CD14-positive monocyte (primary cell): ENCODE measurements at regions of chr16 and their contacts with region 1.

Region 1: GRCh38 chr16:4802659-4803287 is 340 bp upstream of the ROGDI start:
- DNase-seq: peak; percentile 83 to 91 (median 86)
- H3K4me3 ChIP-seq: peak overlapping the region; percentile 72 to 92 (median 75)
- H3K4me3 Mint-ChIP-seq: peak overlapping the region; percentile 87 to 89
- H3K27ac ChIP-seq: peak overlapping the region; percentile 77 to 86
- H3K27ac Mint-ChIP-seq: peak overlapping the region; percentile 86 to 97 (median 96)
- H3K4me1 ChIP-seq: peaks cover 40 to 48% of the 10 kb centered on the region in 2 donors
- H3K4me1 Mint-ChIP-seq: peaks cover 42% of the 10 kb centered on the region
- H3K27me3 ChIP-seq: no peaks in the 10 kb centered on the region
- H3K27me3 Mint-ChIP-seq: peaks cover 0 to 2% (median 0%) of the 10 kb centered on the region in 3 donors
- CTCF ChIP-seq: no peak

Region 2: GRCh38 chr16:4572715-4573114 is 230.1 kb before region 1 on chr16:
- intact Hi-C with region 1: no loop called
- DNase-seq: no peak
- H3K4me3 ChIP-seq: no peak overlapping the region
- H3K4me3 Mint-ChIP-seq: no peak overlapping the region
- H3K27ac ChIP-seq: no peak overlapping the region
- H3K27ac Mint-ChIP-seq: no peak overlapping the region
- H3K4me1 ChIP-seq: peaks cover 0 to 2% of the 10 kb centered on the region in 2 donors
- H3K4me1 Mint-ChIP-seq: peaks cover 6% of the 10 kb centered on the region
- H3K27me3 ChIP-seq: no peaks in the 10 kb centered on the region
- H3K27me3 Mint-ChIP-seq: peaks cover 2 to 3% (median 2%) of the 10 kb centered on the region in 3 donors
- CTCF ChIP-seq: no peak

Region 3: GRCh38 chr16:4734063-4734729 is 68.6 kb before region 1 on chr16 and contains the starts of genes ANKS3 and DNAAF8:
- intact Hi-C with region 1: loop called (anchors 5 kb)
- DNase-seq: peak; percentile 84 to 89 (median 88)
- H3K4me3 ChIP-seq: peak within 1 kb of the TSS; percentile 89 to 100 (median 99)
- H3K4me3 Mint-ChIP-seq: peak within 1 kb of the TSS; percentile 87 to 99
- H3K27ac ChIP-seq: peak within 1 kb of the TSS; percentile 50 to 61
- H3K27ac Mint-ChIP-seq: peak within 1 kb of the TSS; percentile 72 to 94 (median 93)
- H3K4me1 ChIP-seq: peaks cover 16 to 20% of the 10 kb centered on the region in 2 donors
- H3K4me1 Mint-ChIP-seq: peaks cover 14% of the 10 kb centered on the region
- H3K27me3 ChIP-seq: no peaks in the 10 kb centered on the region
- H3K27me3 Mint-ChIP-seq: peaks cover 0 to 2% (median 0%) of the 10 kb centered on the region in 3 donors
- CTCF ChIP-seq: no peak
- polyA plus RNA-seq, gene ANKS3: 0.59 to 13.7 (median 0.95) TPM
- polyA plus RNA-seq, gene DNAAF8: 0.04 to 0.36 TPM in 2 of 3 donors, not detected in the other

Region 4: DNA sequence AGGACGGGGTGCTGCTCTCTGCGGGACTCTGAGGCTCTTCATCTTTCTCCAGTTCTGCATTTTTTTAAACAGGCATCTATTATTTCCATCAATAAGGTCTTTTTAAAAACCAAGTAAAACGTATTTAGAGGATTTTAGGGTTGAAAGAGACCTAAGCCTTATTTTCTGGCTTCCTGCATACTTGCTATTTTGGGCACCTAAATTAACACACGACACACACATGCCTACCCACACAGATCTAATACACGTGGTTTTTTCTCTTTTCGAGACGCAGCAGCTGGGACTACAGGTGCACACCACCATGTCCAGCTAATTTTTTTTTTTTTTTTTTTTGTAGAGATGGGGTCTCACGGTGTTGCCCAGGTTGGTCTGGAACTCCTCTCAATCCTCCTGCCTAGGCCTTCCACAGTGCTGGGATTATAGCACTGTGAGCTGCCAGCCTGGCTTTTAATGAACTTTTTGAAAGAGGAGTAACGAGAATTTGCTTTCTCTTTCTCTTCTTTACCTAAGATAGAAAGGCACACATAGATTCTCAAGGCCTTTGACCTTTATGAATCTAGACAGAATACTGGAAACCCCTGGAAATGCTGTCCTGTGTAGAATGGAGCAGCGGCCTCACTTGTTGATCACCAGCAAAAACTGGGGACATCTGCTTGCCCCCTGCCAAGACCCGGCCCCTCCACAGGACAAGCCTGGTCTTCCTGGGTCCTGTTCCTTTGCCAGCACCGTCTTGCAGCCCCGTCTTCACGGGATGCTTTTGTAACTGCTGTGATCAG is 54.7 kb before region 1 on chr16:
- intact Hi-C with region 1: no loop called
- DNase-seq: no peak
- H3K4me3 ChIP-seq: no peak overlapping the region
- H3K4me3 Mint-ChIP-seq: no peak overlapping the region
- H3K27ac ChIP-seq: no peak overlapping the region
- H3K27ac Mint-ChIP-seq: peak overlapping the region in 1 of 7 donors; percentile 68
- H3K4me1 ChIP-seq: peaks cover 4 to 6% of the 10 kb centered on the region in 2 donors
- H3K4me1 Mint-ChIP-seq: peaks cover 6% of the 10 kb centered on the region
- H3K27me3 ChIP-seq: no peaks in the 10 kb centered on the region
- H3K27me3 Mint-ChIP-seq: peaks cover 5 to 8% (median 8%) of the 10 kb centered on the region in 3 donors
- CTCF ChIP-seq: no peak

Region 5: DNA sequence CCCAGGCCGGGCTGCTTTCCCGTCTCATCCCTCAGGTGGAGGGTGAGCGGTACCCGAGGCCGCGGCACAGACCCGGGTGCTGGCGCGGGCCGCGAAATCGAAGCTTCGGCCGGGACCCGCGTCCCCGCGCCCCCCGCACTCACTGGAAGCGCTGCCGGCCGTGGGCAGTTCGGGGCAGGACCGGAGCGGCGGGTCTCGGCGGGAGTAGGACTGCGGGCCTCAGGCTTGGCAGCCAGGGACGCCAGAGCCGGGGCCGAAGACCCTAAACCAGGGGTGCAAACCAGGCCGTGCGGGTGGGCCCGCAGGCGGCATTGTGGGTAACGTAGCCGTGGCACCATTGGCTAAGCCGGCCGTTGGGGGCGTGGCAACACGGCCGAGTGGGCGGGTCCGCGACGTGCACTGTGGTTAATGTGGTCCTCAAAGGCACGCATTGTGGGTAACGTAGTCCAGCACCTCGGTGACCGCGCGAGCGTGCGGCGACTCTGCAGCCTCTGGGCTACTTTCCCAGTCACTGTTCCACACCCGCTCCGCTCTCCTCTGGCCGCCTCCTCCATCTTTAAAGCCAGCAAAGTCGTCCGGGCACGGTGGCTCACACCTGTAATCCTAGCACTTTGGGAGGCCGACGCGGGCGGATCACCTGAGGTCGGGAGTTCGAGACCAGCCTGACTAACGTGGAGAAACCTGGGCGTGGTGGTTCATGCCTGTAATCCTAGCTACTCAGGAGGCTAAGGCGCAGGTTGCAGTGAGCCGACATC is 35.7 kb before region 1 on chr16 and contains the start of gene ZNF500:
- intact Hi-C with region 1: loop called (anchors 2 to 5 kb)
- DNase-seq: peak; percentile 91 to 97 (median 93)
- H3K4me3 ChIP-seq: peak within 1 kb of the TSS; percentile 73 to 93 (median 91)
- H3K4me3 Mint-ChIP-seq: peak within 1 kb of the TSS; percentile 88 to 97
- H3K27ac ChIP-seq: peak within 1 kb of the TSS; percentile 1 to 78
- H3K27ac Mint-ChIP-seq: peak within 1 kb of the TSS; percentile 88 to 96 (median 93)
- H3K4me1 ChIP-seq: peaks cover 25 to 36% of the 10 kb centered on the region in 2 donors
- H3K4me1 Mint-ChIP-seq: peaks cover 35% of the 10 kb centered on the region
- H3K27me3 ChIP-seq: no peaks in the 10 kb centered on the region
- H3K27me3 Mint-ChIP-seq: peaks cover 0 to 5% (median 1%) of the 10 kb centered on the region in 3 donors
- CTCF ChIP-seq: no peak
- polyA plus RNA-seq, gene ZNF500: 2.4 to 5.6 (median 5.2) TPM

Region 6: DNA sequence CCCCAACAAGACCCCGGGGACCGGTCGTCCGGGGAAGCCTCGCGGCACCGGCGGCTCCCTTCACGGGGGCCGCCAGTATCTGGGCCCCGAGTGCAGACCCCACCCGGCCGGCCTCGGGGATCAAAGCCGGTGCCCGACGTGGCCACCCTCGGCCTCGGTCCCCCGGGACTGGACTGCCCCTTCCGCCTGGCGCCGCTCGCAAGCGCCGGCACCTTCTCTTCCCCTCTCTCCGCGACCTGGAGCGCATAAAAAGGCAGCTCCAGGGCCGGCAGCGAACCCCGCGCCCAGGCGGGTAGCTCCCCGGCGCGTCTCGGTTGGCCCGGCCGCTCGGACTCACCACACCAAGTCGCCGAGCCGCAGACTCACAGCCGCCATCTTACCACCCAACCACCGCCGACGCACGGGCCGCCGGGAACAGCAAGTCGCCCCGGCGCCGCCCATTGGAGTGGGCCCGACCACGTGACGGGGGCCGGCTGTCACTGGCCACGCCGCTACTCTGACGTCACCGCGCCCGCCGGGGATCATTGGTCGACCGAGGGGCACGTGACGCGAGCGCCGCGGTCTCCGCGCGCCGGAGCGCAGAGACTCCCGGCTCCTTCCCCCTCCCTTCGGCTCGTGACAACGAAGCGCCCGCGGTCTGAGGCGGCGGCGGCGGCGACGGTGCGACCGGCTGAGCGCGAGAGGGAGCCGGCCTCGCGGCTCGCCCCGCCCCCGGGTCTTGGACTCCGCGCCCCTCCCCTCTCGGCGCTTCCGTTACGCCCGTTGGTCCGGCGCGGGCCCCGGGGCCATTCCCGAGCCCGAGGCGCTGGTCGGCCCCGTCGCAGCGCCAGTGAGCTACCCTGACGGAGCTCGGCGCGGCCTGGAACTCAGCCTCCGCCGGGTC is 44.4 kb after region 1 on chr16 and contains the starts of genes GLYR1 and UBN1:
- intact Hi-C with region 1: loop called (anchors 2 to 5 kb)
- DNase-seq: peak; percentile 97 to 98 (median 98)
- H3K4me3 ChIP-seq: peak within 1 kb of the TSS; percentile 83 to 93 (median 90)
- H3K4me3 Mint-ChIP-seq: peak within 1 kb of the TSS; percentile 90 to 94
- H3K27ac ChIP-seq: peak within 1 kb of the TSS; percentile 90 to 97
- H3K27ac Mint-ChIP-seq: peak within 1 kb of the TSS; percentile 88 to 96 (median 94)
- H3K4me1 ChIP-seq: peaks cover 42 to 52% of the 10 kb centered on the region in 2 donors
- H3K4me1 Mint-ChIP-seq: peaks cover 52% of the 10 kb centered on the region
- H3K27me3 ChIP-seq: no peaks in the 10 kb centered on the region
- H3K27me3 Mint-ChIP-seq: no peaks in the 10 kb centered on the region
- CTCF ChIP-seq: no peak
- polyA plus RNA-seq, gene GLYR1: 34.2 to 41.9 (median 39.3) TPM
- polyA plus RNA-seq, gene UBN1: 5.3 to 24.5 (median 7.3) TPM

Region 7: GRCh38 chr16:4882633-4883285 is 80.0 kb after region 1 on chr16:
- intact Hi-C with region 1: no loop called
- DNase-seq: no peak
- H3K4me3 ChIP-seq: no peak overlapping the region
- H3K4me3 Mint-ChIP-seq: no peak overlapping the region
- H3K27ac ChIP-seq: peak overlapping the region in 1 of 2 donors; percentile 26
- H3K27ac Mint-ChIP-seq: peak overlapping the region in 1 of 7 donors; percentile 2
- H3K4me1 ChIP-seq: no peaks in the 10 kb centered on the region
- H3K4me1 Mint-ChIP-seq: no peaks in the 10 kb centered on the region
- H3K27me3 ChIP-seq: no peaks in the 10 kb centered on the region
- H3K27me3 Mint-ChIP-seq: peaks cover 0 to 2% (median 0%) of the 10 kb centered on the region in 3 donors
- CTCF ChIP-seq: no peak